Vagina (tissue), 2 donors: ENCODE measurements at regions of chr15 and their contacts with region 1.

Region 1: GRCh38 chr15:43285609-43286037 is 18.9 kb upstream of the TGM5 start:
- DNase-seq: peak in 1 of 2 donors; percentile 46
- H3K4me3 ChIP-seq: no peak overlapping the region
- H3K27ac ChIP-seq: no peak overlapping the region
- H3K4me1 ChIP-seq: peaks cover 7% of the 10 kb centered on the region
- H3K27me3 ChIP-seq: no peaks in the 10 kb centered on the region
- CTCF ChIP-seq: peak; percentile 73 to 85 (median 75)
- POLR2A ChIP-seq: no peak

Region 2: GRCh38 chr15:42914728-42915497 is 370.7 kb before region 1 on chr15:
- intact Hi-C with region 1: loop called (anchors 5 kb)
- DNase-seq: no peak
- H3K4me3 ChIP-seq: no peak overlapping the region
- H3K27ac ChIP-seq: no peak overlapping the region
- H3K4me1 ChIP-seq: peaks cover 9% of the 10 kb centered on the region
- H3K27me3 ChIP-seq: no peaks in the 10 kb centered on the region
- CTCF ChIP-seq: no peak
- POLR2A ChIP-seq: no peak

Region 3: DNA sequence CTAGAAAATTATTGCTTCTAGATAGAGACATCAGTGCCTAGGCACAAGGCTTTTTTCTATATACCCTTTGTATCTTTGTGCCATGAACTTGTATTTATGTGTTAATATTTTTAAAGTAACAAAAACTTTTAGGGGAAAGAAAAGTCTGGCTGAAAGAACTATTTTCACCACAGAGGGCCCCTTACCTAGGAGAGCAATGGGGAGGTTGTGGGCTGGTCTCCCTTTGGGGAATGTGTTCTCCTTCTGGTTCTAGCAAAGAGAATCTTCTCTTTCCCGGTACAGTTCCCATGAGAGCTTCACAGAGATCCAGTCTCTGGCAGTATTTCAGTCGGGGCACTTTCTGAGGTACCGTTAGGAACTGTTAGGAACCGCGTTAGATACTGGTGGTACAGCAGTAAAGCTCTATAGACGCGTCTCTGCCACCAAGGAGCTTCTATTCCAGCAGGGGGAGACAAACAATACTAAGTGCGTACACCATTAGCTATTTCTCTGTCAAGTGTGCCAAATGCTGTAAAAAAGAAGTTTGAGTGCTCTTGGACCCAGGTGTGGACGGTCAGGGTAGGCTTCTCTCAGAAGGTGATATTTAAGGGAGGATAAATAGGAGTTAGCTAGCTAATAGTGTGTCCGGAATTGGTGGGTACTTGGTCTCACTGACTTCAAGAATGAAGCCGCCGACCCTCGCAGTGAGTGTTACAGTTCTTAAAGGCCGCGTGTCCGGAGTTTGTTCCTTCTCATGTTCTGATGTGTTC is 60.2 kb before region 1 on chr15:
- intact Hi-C with region 1: loop called (anchors 5 kb)
- DNase-seq: no peak
- H3K4me3 ChIP-seq: no peak overlapping the region
- H3K27ac ChIP-seq: no peak overlapping the region
- H3K4me1 ChIP-seq: no peaks in the 10 kb centered on the region
- H3K27me3 ChIP-seq: no peaks in the 10 kb centered on the region
- CTCF ChIP-seq: peak; percentile 39 to 69 (median 60)
- POLR2A ChIP-seq: no peak